ENCODE measurements at regions of chr7 and their contacts with region 1.

Region 1: DNA sequence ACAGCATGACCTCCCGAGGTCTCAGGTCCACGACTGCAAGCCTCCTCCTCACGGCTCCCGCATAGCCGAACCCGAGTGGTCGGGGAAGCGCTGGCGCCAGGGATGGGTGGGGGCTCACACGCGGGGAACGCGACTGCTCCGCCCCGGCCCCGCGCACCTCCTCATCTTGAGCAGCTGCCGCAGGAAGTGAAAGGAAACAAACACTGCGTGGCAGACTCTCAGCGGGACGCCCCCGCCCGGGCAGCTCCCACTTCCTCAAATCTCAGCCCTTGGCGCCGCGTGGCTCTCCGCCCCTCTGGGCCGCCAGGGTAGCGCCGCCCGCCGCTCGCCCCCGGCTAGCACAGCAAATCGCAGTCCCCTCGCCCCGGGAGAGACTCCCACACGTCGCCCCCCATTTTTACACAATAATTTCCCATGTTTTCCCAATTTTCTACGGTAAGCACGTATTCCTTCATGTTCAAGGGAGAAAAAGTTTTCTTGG is at the start of gene TMEM243:
- DNase-seq: peak; percentile 62 to 73 (median 68)
- ATAC-seq: peak; percentile 83
- H3K4me3 ChIP-seq: peak within 1 kb of the TSS; percentile 61
- H3K27ac ChIP-seq: peak within 1 kb of the TSS; percentile 9; the same call in 1 of the 3 replicates
- H3K4me1 ChIP-seq: peaks cover 11 to 18% of the 10 kb centered on the region in 2 experiments; a peak in 4 of 5 replicates
- H3K27me3 ChIP-seq: peaks cover 24 to 29% of the 10 kb centered on the region in 2 experiments; a peak in 4 of 5 replicates
- CTCF ChIP-seq: peak in 2 of 3 experiments; percentile 14 to 19; a peak in 1 of 6 replicates
- EP300 ChIP-seq: no peak
- POLR2A ChIP-seq: no peak
- RAD21 ChIP-seq: no peak
- polyA plus RNA-seq, gene TMEM243: 3.9 to 4.2 TPM

Region 2: DNA sequence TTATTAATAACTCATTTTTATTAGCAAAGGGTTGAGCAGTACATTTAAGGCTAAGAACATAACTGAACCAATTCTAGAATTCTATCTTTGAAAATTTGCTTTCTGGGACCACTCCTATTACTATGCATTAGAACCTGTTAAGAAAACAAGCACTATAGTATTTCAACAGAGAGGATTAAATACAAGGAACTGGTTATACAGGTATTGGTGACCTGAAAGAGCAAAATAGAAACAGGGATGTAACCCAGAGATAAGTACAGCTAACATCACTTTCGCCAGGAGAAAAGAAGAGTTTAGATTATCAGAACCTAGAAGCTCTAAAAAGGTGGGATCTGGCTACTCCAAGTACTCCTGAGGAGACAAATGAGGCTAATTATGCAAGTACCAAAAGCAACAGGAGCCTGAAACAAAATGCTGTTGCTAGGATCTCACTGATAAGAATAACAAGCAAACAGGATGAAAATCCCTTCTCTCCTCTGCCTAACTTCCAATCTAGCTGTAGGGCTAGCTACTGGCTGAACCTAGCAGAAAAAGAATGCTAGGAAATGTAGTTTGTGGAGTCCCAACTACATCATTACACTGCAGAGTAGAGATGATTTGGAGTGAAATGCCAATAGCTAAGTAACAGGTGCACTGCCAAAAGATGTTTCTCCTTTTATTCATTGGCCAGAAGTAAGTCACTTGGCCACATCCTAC is 127.9 kb before region 1 on chr7:
- CTCF ChIA-PET with region 1: no interaction called
- POLR2A ChIA-PET with region 1: no interaction called
- in situ Hi-C with region 1: no loop called
- intact Hi-C with region 1: no loop called
- DNase-seq: no peak
- ATAC-seq: no peak; the same call in 2 of the 3 replicates
- H3K4me3 ChIP-seq: no peak overlapping the region
- H3K27ac ChIP-seq: no peak overlapping the region
- H3K4me1 ChIP-seq: no peaks in the 10 kb centered on the region
- H3K27me3 ChIP-seq: no peaks in the 10 kb centered on the region
- CTCF ChIP-seq: no peak
- EP300 ChIP-seq: no peak
- POLR2A ChIP-seq: no peak
- RAD21 ChIP-seq: no peak

Region 3: GRCh38 chr7:87876040-87876868 is 656.7 kb after region 1 on chr7 and contains the starts of genes DBF4 and SLC25A40:
- CTCF ChIA-PET with region 1: no interaction called
- POLR2A ChIA-PET with region 1: no interaction called
- in situ Hi-C with region 1: no loop called
- intact Hi-C with region 1: loop called (anchors 10 kb)
- DNase-seq: peak; percentile 92 to 98 (median 93)
- ATAC-seq: peak; percentile 86
- H3K4me3 ChIP-seq: peak within 1 kb of the TSS; percentile 86
- H3K27ac ChIP-seq: peak within 1 kb of the TSS; percentile 92
- H3K4me1 ChIP-seq: peaks cover 10% of the 10 kb centered on the region in 2 experiments; a peak in 4 of 5 replicates
- H3K27me3 ChIP-seq: no peaks in the 10 kb centered on the region
- CTCF ChIP-seq: no peak
- EP300 ChIP-seq: peak; percentile 57; the same call in 1 of the 2 replicates
- POLR2A ChIP-seq: peak; percentile 92
- RAD21 ChIP-seq: no peak
- polyA plus RNA-seq, gene DBF4: 38.4 to 43.5 TPM
- polyA plus RNA-seq, gene SLC25A40: 19.0 to 25.1 TPM

Measured in K562 (cell line).